ENCODE measurements at regions of chr2 and their contacts with region 1.

Region 1: GRCh38 chr2:111100765-111101162 is 19.9 kb upstream of the BCL2L11 start:
- DNase-seq: no peak
- ATAC-seq: no peak
- H3K4me3 ChIP-seq: no peak overlapping the region
- H3K27ac ChIP-seq: no peak overlapping the region
- H3K4me1 ChIP-seq: peaks cover 0 to 8% (median 0%) of the 10 kb centered on the region in 9 donors
- H3K27me3 ChIP-seq: no peaks in the 10 kb centered on the region
- CTCF ChIP-seq: peak in 1 of 9 donors; percentile 20

Region 2: GRCh38 chr2:111162718-111163331 is 62.1 kb after region 1 on chr2:
- intact Hi-C with region 1: loop called in 1 of 10 experiments (anchors 2 kb)
- DNase-seq: no peak
- ATAC-seq: peak in 3 of 8 donors; percentile 19 to 54 (median 21)
- H3K4me3 ChIP-seq: no peak overlapping the region
- H3K27ac ChIP-seq: peak overlapping the region in 5 of 10 donors; percentile 12 to 56 (median 27)
- H3K4me1 ChIP-seq: peaks cover 0 to 65% (median 45%) of the 10 kb centered on the region in 9 donors
- H3K27me3 ChIP-seq: no peaks in the 10 kb centered on the region
- CTCF ChIP-seq: no peak